ENCODE measurements at regions of chr1 and their contacts with region 1.

Region 1: GRCh38 chr1:24621121-24621520 is 22.0 kb upstream of the SRRM1 start:
- DNase-seq: no peak
- H3K4me3 ChIP-seq: no peak overlapping the region
- H3K27ac ChIP-seq: no peak overlapping the region
- H3K4me1 ChIP-seq: no peaks in the 10 kb centered on the region
- H3K27me3 ChIP-seq: peaks cover 0 to 9% of the 10 kb centered on the region in 2 donors
- CTCF ChIP-seq: no peak

Region 2: DNA sequence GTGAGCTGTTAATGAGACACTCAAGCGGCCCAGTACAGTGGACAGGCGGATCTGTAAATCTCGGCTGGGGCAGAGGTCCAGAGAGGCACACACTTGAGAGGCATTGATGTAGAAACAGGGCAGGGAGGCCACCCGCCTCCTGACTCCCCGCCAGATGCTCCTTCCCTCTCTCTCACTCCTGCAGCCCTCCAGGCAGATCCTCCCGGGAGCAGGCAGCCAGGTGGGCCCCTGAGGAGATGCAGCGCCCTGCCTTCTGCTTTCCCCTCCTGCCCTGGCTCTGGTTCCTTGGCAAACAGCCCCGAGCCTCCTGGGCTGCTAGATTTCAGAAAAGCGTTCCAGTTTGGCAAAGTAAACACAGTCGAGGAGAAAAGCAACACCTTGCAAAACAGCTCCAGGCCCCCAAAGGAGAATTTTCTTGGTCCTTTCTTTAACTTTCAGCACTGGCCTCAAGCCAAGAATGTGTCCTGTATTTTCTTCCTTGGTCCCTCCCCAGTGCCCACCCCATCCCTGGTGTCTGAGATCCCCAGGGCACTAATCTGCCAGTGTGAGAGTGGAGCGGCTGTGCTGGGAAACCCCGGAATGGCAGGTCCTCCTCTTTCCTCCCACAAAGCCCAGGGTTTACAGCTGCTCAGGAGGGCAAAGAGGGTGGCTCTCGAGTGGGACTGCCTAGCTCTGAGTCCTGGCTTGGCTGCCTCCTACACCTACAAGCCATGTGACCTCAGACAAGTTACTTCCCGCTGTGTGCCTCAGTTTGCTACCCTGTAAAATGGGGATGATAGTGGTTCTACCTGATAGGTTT is 404.6 kb before region 1 on chr1:
- intact Hi-C with region 1: loop called (anchors 10 kb)
- DNase-seq: no peak
- H3K4me3 ChIP-seq: no peak overlapping the region
- H3K27ac ChIP-seq: no peak overlapping the region
- H3K4me1 ChIP-seq: peaks cover 0 to 8% (median 0%) of the 10 kb centered on the region in 4 donors
- H3K27me3 ChIP-seq: peaks cover 0 to 61% of the 10 kb centered on the region in 2 donors
- CTCF ChIP-seq: no peak